ENCODE measurements at regions of chr4 and their contacts with region 1.

Region 1: DNA sequence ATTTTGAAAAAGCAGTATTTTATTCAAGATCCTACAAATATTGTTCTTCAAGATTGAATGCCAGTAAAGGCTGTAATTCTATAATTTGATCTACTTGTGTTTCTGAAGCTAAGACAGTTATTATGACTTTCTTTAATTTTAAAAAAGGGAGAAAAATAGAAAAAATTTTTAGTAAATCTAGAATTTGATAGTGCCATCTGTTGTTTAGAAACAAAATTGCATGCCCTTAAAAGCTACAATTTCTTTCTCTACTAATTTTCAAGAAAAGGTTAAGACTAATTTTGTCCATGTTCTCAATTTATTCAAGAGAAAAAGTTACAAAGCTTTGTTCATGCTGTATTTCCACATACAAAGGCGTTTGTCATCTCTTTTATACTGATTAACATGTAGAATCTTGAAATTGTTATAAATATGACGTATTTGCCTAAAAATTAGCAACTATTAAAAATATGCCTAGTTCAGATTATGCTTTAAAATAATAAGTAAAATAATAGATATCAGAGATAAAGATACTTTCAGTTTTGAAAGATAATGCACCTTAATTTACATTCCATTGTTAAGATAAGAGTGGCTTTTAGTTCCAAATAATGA is 25.6 kb upstream of the MMRN1 start:
- DNase-seq: peak; percentile 2

Region 2: DNA sequence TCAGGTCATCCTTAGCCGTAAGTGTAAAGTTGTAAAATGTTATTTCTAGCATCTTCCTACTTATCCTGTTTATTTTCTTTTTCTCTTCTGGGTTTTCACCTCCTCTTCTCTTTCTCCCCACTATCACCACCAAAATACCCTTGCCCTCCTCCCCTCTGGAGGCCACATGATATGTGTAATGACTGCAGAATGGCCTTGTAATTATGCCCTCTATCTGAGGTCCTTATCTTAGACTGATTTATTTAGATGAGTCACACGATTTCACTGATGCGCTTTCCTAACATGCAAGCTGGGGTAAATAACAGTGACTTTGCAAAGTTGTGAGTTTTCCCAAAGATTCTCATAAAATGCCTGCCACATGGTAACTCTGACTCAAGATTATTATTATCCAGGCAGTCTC is 329.7 kb before region 1 on chr4:
- in situ Hi-C with region 1: no loop called
- DNase-seq: peak; percentile 19

Region 3: GRCh38 chr4:89657931-89658700 is 211.0 kb before region 1 on chr4:
- in situ Hi-C with region 1: loop called (anchors 25 kb)
- DNase-seq: peak; percentile 27

Measured in Caki2 (cell line).